ENCODE measurements at regions of chr18 and their contacts with region 1.

Region 1: DNA sequence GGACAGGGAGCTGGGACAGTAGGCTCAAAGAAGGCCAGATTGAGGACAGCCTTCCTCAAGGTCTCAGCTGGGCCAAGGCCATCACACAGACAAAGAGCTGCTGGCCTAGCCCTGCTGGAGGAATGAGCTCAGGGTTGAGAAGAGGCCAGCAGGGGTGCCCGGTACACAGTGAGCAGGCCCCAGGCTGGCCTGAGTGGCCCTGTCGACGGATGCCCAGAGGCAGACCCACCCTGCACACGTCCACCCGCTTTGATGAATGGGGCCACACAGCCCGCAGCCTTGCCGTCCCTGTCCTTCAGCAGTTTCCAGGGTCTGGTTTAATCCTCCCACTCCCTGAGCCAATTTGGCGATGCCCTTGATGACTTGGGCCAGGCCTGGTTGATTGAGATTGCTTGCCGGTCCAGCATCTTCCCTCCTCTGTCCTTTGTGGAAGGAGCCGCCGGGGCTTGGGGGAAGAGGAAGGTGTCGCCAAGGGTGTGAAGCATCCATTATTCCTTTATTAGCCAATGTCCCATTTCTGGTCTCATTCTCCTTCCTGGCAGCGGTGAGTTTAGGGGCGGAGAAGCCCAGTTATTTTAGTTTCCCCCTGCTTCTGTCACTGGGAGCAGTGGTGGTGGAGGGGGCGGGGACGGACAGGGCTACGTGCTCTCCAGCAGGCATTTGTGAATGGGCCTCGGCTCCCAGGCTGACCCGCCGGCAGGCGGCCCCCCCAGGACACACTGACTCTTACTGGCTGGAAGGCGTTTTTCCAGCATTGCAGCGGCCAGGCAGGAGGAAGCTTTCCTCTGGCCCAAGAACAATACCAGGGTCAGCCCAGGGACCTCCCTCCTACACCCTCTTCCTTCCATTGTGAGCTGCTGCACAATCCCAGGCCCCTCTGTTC is 141.7 kb downstream of the CTIF start:
- DNase-seq: peak; percentile 59 to 93
- H3K4me3 ChIP-seq: no peak overlapping the region
- H3K27ac ChIP-seq: peak overlapping the region; percentile 84 to 86
- H3K4me1 ChIP-seq: peaks cover 21 to 44% of the 10 kb centered on the region in 2 donors
- H3K27me3 ChIP-seq: no peaks in the 10 kb centered on the region
- CTCF ChIP-seq: peak in 2 of 3 experiments; percentile 17 to 40

Region 2: GRCh38 chr18:48742706-48743475 is 62.3 kb after region 1 on chr18:
- intact Hi-C with region 1: loop called (anchors 5 kb)
- DNase-seq: peak; percentile 60 to 84
- H3K4me3 ChIP-seq: peak overlapping the region in 1 of 2 donors; percentile 29
- H3K27ac ChIP-seq: peak overlapping the region; percentile 80 to 84
- H3K4me1 ChIP-seq: peaks cover 25 to 61% of the 10 kb centered on the region in 2 donors
- H3K27me3 ChIP-seq: no peaks in the 10 kb centered on the region
- CTCF ChIP-seq: no peak